Activated CD4-positive, alpha-beta T cell treated with anti-CD3 and anti-CD28 coated beads for 36 hours (primary cell): ENCODE measurements at regions of chr17 and their contacts with region 1.

Region 1: DNA sequence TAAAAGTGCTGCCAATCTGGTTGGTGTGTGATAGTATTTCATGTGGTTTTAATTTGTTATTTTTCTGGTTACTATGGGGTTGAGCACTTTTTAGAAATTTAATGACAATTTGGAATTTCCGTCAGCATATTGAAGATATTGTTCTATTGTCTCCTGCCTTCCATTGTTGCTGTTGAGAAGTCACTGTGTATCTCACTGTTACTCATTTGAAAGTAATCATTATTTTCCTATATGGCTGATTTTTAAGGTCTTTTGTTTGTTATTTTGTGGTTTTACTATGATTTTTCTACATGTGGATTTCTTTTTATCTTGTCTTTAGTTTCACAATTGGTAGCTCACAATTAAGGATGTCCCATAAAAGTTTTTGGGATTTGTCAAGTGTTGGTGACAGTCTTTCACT is 8.2 kb downstream of the KRT26 start:
- DNase-seq: no peak
- ATAC-seq: no peak
- H3K4me3 Mint-ChIP-seq: no peak overlapping the region
- H3K27ac Mint-ChIP-seq: no peak overlapping the region
- H3K4me1 Mint-ChIP-seq: no peaks in the 10 kb centered on the region
- H3K27me3 Mint-ChIP-seq: peaks cover 31% of the 10 kb centered on the region

Region 2: GRCh38 chr17:40738553-40738952 is 25.2 kb before region 1 on chr17:
- CTCF ChIA-PET with region 1: no interaction called
- POLR2A ChIA-PET with region 1: no interaction called
- intact Hi-C with region 1: loop called in 1 of 2 experiments (anchors 1 kb)
- DNase-seq: no peak
- ATAC-seq: no peak
- H3K4me3 Mint-ChIP-seq: no peak overlapping the region
- H3K27ac Mint-ChIP-seq: no peak overlapping the region
- H3K4me1 Mint-ChIP-seq: no peaks in the 10 kb centered on the region
- H3K27me3 Mint-ChIP-seq: peaks cover 12% of the 10 kb centered on the region

Region 3: GRCh38 chr17:40793832-40794231 is 30.1 kb after region 1 on chr17:
- CTCF ChIA-PET with region 1: no interaction called
- POLR2A ChIA-PET with region 1: no interaction called
- intact Hi-C with region 1: no loop called
- DNase-seq: no peak
- ATAC-seq: no peak
- H3K4me3 Mint-ChIP-seq: no peak overlapping the region
- H3K27ac Mint-ChIP-seq: no peak overlapping the region
- H3K4me1 Mint-ChIP-seq: no peaks in the 10 kb centered on the region
- H3K27me3 Mint-ChIP-seq: peaks cover 22% of the 10 kb centered on the region